ENCODE measurements at regions of chr7 and their contacts with region 1.

Region 1: GRCh38 chr7:134943764-134944400 is 42.4 kb upstream of the AGBL3 start:
- DNase-seq: no peak
- H3K4me3 ChIP-seq: no peak overlapping the region
- H3K27ac ChIP-seq: no peak overlapping the region
- H3K27me3 ChIP-seq: no peaks in the 10 kb centered on the region
- CTCF ChIP-seq: no peak

Region 2: DNA sequence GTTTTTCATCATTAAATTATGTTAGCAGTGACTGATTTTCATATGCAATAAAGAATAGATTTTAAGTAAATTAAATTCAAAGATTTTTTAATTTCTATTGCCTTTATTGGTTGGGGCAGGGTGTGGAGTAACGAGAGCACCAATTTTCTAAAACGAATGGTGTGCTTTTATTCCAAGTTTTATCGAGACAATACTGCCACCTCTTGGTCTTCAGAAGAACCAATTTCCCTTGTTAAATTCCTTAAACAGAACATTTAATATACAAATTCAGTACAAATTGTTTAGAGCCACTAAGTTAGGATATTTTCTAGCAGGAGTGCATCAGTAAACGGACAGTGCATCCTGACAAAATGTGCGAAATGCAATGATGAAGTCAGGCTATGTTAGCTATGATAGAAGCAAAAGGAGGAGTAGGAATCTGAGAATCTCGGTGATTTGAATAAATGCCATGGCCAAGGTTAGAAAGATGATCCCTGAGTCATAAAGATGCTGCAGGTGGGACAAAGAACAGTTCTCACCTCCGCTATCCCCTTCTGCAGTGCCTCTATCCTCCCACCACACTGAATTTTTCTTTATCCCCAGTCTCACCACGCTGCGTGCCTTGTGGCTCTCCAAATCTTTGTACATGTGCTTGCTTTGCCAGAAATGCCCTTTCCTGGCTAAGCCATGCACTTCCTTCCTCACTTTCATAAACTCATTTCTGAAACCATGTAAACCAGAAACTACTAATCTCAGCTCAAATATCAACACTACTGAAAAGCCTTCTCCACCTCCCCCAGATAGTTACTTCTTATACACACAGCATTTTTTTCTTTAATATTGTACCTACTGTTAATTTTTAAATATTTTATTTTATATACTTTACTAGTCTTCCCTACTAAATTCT is 10.6 kb after region 1 on chr7:
- CTCF ChIA-PET with region 1: interaction called, 15 read pairs
- POLR2A ChIA-PET with region 1: no interaction called
- DNase-seq: no peak
- H3K4me3 ChIP-seq: no peak overlapping the region
- H3K27ac ChIP-seq: no peak overlapping the region
- H3K27me3 ChIP-seq: no peaks in the 10 kb centered on the region
- CTCF ChIP-seq: peak; percentile 57

Measured in AG04450 (cell line).